Common myeloid progenitor, CD34-positive (primary cell): ENCODE measurements at regions of chr2 and their contacts with region 1.

Region 1: GRCh38 chr2:85785027-85785822 is 31.4 kb downstream of the ATOH8 start:
- DNase-seq: peak; percentile 82 to 95 (median 94)
- H3K4me3 ChIP-seq: peak overlapping the region in 3 of 7 experiments; percentile 19 to 58 (median 48)
- H3K27ac ChIP-seq: no peak overlapping the region
- H3K4me1 ChIP-seq: peaks cover 0 to 29% (median 25%) of the 10 kb centered on the region in 4 experiments
- H3K27me3 ChIP-seq: peaks cover 0 to 4% (median 0%) of the 10 kb centered on the region in 5 experiments

Region 2: GRCh38 chr2:85758361-85759256 is 26.6 kb before region 1 on chr2:
- CTCF ChIA-PET with region 1: interaction called, 21 read pairs
- POLR2A ChIA-PET with region 1: no interaction called
- DNase-seq: no peak
- H3K4me3 ChIP-seq: no peak overlapping the region
- H3K27ac ChIP-seq: no peak overlapping the region
- H3K4me1 ChIP-seq: peaks cover 0 to 21% (median 19%) of the 10 kb centered on the region in 4 experiments
- H3K27me3 ChIP-seq: peaks cover 0 to 43% (median 30%) of the 10 kb centered on the region in 5 experiments

Region 3: GRCh38 chr2:85772019-85772745 is 13.0 kb before region 1 on chr2:
- CTCF ChIA-PET with region 1: interaction called, 58 read pairs
- POLR2A ChIA-PET with region 1: interaction called, 4 read pairs
- DNase-seq: peak; percentile 70 to 84 (median 79)
- H3K4me3 ChIP-seq: peak overlapping the region in 2 of 7 experiments; percentile 40 to 45
- H3K27ac ChIP-seq: no peak overlapping the region
- H3K4me1 ChIP-seq: peaks cover 0 to 16% (median 9%) of the 10 kb centered on the region in 4 experiments
- H3K27me3 ChIP-seq: peaks cover 0 to 9% (median 1%) of the 10 kb centered on the region in 5 experiments